K562 (cell line): ENCODE measurements at regions of chr14 and their contacts with region 1.

Region 1: GRCh38 chr14:50101417-50101816 is 15.0 kb downstream of the VCPKMT start:
- DNase-seq: no peak
- ATAC-seq: no peak
- H3K4me3 ChIP-seq: no peak overlapping the region
- H3K27ac ChIP-seq: no peak overlapping the region
- H3K4me1 ChIP-seq: no peaks in the 10 kb centered on the region; a peak in 1 of 5 replicates
- H3K27me3 ChIP-seq: no peaks in the 10 kb centered on the region
- CTCF ChIP-seq: no peak
- EP300 ChIP-seq: no peak
- POLR2A ChIP-seq: no peak
- RAD21 ChIP-seq: no peak

Region 2: DNA sequence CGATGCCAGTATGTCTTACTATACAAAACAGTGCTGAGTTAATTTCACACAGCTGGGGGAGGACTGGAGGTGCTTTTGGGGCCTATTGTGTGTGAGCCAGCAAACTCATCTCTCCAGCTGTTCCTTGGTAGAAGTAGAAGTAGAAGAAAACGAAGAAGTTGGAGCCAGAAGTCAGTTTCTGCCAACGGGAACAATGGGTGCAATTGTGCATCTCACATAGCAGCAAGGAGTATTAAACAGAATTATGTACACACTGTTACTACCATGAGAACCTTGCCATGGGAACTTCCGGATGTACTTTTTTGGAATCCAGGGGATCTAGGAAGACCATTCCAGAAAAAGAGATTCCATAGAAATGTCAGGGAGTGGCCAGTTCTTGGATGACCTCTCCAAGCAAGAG is 73.6 kb before region 1 on chr14:
- CTCF ChIA-PET with region 1: no interaction called
- POLR2A ChIA-PET with region 1: no interaction called
- in situ Hi-C with region 1: no loop called
- intact Hi-C with region 1: no loop called
- DNase-seq: no peak
- ATAC-seq: no peak
- H3K4me3 ChIP-seq: no peak overlapping the region
- H3K27ac ChIP-seq: no peak overlapping the region
- H3K4me1 ChIP-seq: peaks cover 3 to 6% of the 10 kb centered on the region in 2 experiments; a peak in 3 of 5 replicates
- H3K27me3 ChIP-seq: no peaks in the 10 kb centered on the region
- CTCF ChIP-seq: no peak
- EP300 ChIP-seq: no peak
- POLR2A ChIP-seq: no peak
- RAD21 ChIP-seq: no peak

Region 3: GRCh38 chr14:50038398-50039119 is 62.9 kb before region 1 on chr14:
- CTCF ChIA-PET with region 1: no interaction called
- POLR2A ChIA-PET with region 1: no interaction called
- in situ Hi-C with region 1: no loop called
- intact Hi-C with region 1: loop called (anchors 2 kb)
- DNase-seq: peak in 2 of 4 experiments; percentile 48 to 63
- ATAC-seq: peak; percentile 89
- H3K4me3 ChIP-seq: no peak overlapping the region
- H3K27ac ChIP-seq: peak overlapping the region; percentile 33; the same call in 2 of the 3 replicates
- H3K4me1 ChIP-seq: peaks cover 9 to 25% of the 10 kb centered on the region in 2 experiments
- H3K27me3 ChIP-seq: no peaks in the 10 kb centered on the region
- CTCF ChIP-seq: peak; percentile 29 to 53 (median 31); a peak in 2 of 6 replicates
- EP300 ChIP-seq: no peak
- POLR2A ChIP-seq: no peak
- RAD21 ChIP-seq: peak; percentile 45 to 57

Region 4: DNA sequence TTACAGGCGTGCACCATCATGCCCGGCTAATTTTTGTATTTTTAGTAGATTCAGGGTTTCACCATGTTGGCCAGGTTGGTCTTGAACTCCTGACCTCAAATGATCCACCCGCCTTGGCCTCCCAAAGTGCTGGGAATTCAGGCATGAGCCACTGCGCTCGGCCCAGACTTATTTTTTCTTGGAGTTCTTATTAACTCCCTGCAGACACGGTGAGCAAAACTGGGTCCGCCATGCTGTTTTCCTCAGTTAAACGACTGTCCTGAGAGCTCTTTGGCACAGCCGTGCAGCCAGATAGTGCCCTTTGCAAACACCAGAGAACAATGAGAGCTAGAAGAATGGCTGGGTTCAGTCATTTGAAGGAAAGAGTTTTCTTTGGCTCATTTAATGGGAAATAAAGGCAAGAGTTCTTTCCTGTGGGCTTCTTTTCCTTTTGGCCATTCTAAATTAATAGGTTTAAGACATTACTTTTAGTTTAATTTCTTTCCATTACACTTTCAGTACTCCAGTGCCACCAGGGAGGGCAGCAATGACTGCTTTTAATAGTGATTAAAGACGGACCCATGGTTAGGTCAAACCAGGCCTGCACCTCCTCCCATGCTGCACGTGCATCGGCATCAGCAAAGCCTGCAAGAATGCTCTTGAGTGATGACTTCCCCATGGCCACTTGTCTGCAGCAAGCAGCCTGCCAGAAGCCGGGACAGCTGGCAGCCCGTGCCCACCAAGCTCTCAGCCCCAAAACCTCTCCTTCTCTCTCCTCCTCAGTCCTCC is 45.8 kb before region 1 on chr14:
- CTCF ChIA-PET with region 1: no interaction called
- POLR2A ChIA-PET with region 1: no interaction called
- in situ Hi-C with region 1: no loop called
- intact Hi-C with region 1: no loop called
- DNase-seq: no peak
- ATAC-seq: no peak
- H3K4me3 ChIP-seq: no peak overlapping the region
- H3K27ac ChIP-seq: no peak overlapping the region
- H3K4me1 ChIP-seq: peaks cover 15 to 32% of the 10 kb centered on the region in 2 experiments
- H3K27me3 ChIP-seq: no peaks in the 10 kb centered on the region
- CTCF ChIP-seq: no peak
- EP300 ChIP-seq: no peak
- POLR2A ChIP-seq: no peak
- RAD21 ChIP-seq: no peak